ENCODE measurements at regions of chr3 and their contacts with region 1.

Region 1: DNA sequence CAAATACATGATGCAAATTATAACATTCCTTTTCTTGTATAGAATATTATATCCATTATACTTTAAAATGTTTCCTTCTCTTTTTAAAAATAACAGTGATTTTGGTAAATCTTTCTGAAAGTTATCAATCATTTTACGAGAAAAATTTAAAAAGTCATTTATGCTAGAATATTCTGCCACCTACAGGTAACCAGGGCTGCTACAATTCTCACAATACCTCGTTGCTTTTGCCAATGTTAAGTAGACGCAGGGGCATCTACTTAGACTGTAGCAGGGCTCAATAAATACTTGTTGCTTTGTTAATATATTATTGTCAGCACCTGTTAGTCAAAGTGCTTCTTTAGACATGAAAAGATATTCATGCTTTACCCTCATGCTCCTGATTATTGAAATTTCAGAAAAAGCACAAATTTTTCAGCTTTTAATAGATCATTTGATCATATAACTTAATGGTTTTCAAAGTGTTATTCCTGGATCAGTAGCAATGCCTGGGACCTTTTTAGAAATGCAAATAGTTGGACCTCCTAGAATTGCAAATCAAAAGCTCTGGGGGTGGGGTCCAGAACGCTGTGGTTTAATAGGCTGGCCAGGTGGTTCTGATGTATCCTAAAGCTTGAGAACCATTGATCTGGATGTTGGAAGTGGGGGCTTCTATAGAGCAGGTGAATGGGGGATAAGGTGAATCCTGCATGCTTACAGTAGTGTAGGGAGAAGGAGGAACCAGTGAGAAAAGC is 223.6 kb upstream of the PDZRN3 start:
- H3K4me3 ChIP-seq: no peak overlapping the region
- H3K27ac ChIP-seq: no peak overlapping the region
- H3K4me1 ChIP-seq: no peaks in the 10 kb centered on the region
- CTCF ChIP-seq: no peak

Region 2: DNA sequence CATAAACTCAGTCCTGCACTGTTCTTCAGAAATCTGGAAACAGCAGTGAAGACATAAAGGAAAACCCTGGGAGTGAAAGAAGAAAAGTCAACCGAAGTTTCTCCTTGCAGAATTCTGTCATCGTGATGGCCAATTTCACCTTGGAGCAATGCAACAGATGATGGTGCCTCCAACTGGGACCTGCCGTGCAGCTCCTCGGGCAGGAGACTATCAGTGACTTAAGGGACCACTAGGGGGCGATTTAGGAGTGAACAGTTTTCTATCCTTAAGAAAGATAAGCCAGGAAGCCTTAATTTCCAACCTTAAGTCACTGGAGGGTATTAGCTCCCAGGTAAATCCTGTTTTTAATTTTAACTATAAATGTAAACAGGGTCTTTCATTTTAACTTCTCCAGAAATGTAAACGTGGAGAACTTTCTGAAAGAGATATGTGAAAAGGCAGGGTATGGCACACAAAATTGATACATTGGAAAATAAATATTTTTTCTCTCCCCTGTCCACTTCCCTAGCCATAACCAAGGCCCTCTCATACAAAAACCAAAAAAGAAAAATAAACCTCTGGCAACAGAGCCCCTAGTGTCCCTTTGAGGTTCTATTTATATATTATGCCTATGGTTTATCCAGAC is 339.9 kb before region 1 on chr3:
- CTCF ChIA-PET with region 1: interaction called, 36 read pairs
- POLR2A ChIA-PET with region 1: no interaction called
- H3K4me3 ChIP-seq: no peak overlapping the region
- H3K27ac ChIP-seq: no peak overlapping the region
- H3K4me1 ChIP-seq: no peaks in the 10 kb centered on the region
- CTCF ChIP-seq: no peak

Region 3: DNA sequence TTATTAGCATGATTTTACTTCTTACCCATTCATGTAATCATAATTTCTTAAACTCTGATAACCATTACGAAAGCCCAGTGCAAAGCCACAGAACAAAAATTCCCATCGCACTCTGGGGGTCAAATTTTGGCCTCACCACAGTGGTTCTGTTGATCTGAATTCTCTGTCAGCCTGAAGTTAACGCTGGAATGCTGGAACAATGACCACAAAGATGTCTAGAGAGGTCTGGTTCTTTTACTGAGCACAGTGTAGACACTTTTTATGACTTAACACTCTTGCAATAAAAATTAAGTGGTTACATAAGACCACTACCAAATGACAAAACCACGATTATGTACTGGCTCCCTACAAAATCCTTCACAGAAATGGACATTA is 318.3 kb before region 1 on chr3:
- CTCF ChIA-PET with region 1: no interaction called
- POLR2A ChIA-PET with region 1: no interaction called
- H3K4me3 ChIP-seq: no peak overlapping the region
- H3K27ac ChIP-seq: no peak overlapping the region
- H3K4me1 ChIP-seq: no peaks in the 10 kb centered on the region
- CTCF ChIP-seq: no peak

Measured in HEK293 (cell line).